ENCODE measurements at regions of chr6 and their contacts with region 1.

Region 1: DNA sequence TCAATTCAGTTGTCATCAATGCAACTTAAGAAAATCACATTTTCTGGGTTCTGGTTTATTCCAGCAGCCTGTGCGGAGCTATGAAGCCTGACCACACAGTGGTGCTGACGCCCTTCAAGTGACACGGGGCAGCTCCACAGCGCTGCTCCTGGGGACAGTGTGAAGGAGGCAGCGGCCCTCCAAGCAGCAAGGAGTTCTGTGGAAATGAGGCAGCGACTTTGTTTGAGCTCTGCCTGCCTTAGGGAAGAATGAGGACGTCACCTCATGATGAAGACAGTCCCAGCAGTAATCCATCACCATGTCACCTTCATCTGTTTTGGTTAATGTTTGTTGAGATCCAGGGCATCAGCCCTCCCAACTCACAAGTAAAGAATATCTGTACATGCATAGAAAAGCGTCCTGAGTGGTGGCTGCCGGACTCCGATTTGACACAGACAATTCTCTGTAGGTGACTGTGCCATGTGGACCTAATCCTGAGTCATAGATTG is 168.5 kb upstream of the UST start:
- DNase-seq: peak; percentile 86
- ATAC-seq: peak; percentile 100

Region 2: DNA sequence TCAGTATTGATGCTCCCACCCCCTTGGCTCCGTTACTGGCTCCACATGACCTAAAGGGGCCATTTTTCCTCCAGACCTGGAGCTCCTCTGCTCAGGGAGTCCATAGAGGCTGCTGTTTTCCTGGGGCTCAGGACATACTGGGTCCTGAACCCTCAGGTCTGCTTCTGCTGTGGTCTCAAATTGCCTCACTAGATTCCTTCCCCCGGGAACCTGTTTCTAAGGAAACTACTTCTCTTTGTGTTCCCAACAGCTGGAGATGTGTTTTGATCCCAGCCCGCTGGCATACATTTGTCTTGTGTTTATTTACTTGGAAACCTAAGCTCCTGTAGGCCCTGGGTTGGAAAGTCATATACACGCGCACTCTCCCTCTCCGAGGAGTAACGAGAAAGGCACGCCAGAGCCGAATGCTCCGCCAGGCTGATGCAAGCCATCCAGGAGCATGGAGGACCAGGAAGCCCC is 391.3 kb after region 1 on chr6:
- intact Hi-C with region 1: loop called (anchors 10 kb)
- DNase-seq: no peak
- ATAC-seq: peak; percentile 86

Region 3: DNA sequence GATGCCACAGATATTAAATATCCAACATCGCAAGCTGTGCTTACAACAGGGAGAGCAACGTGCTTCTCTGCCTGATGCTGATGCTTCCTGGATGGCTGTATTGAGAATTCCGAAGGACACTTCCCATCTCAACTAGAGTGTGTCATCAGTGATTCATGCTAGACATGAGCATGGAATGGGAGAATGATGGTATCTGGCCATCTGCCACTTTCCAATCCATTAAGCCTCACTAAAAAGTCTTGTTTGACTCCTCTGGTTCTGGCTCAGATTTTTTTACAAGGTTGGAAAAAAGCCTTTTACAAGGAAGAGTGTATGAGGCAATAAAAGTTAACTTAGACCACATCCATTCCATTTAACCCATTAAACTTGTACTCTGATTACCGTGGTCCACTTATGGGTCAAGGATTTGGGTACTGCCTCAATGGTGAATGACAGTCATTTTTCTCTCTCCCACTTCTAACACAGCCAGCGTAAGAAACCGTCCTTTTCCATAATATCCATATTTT is 433.8 kb after region 1 on chr6:
- intact Hi-C with region 1: loop called (anchors 5 kb)
- DNase-seq: no peak
- ATAC-seq: peak; percentile 75